Sciatic nerve (tissue), 2 donors: ENCODE measurements at regions of chr17 and their contacts with region 1.

Region 1: DNA sequence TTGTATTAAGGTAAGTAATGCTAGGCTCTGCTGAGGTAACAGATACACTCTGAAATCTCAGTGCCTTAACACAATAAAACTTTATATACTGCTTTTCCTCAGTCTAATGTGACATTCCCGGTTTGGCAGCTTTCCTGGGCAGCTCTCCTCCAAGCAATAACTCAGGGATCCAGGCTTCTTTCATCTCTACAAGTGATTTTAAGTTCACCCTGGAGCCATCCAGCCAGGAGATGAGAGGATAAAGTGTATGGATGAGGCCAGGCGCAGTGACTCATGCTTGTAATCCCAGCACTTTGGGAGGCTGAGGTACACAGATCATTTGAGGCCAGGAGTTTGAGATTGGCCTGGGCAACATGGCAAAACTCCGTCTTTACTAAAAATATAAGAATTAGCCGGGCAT is 147.2 kb downstream of the UTP18 start:
- DNase-seq: no peak
- ATAC-seq: no peak

Region 2: GRCh38 chr17:51765282-51766135 is 357.9 kb after region 1 on chr17:
- intact Hi-C with region 1: loop called (anchors 2 kb)
- DNase-seq: no peak
- ATAC-seq: no peak